Common myeloid progenitor, CD34-positive (primary cell): ENCODE measurements at regions of chr7 and their contacts with region 1.

Region 1: DNA sequence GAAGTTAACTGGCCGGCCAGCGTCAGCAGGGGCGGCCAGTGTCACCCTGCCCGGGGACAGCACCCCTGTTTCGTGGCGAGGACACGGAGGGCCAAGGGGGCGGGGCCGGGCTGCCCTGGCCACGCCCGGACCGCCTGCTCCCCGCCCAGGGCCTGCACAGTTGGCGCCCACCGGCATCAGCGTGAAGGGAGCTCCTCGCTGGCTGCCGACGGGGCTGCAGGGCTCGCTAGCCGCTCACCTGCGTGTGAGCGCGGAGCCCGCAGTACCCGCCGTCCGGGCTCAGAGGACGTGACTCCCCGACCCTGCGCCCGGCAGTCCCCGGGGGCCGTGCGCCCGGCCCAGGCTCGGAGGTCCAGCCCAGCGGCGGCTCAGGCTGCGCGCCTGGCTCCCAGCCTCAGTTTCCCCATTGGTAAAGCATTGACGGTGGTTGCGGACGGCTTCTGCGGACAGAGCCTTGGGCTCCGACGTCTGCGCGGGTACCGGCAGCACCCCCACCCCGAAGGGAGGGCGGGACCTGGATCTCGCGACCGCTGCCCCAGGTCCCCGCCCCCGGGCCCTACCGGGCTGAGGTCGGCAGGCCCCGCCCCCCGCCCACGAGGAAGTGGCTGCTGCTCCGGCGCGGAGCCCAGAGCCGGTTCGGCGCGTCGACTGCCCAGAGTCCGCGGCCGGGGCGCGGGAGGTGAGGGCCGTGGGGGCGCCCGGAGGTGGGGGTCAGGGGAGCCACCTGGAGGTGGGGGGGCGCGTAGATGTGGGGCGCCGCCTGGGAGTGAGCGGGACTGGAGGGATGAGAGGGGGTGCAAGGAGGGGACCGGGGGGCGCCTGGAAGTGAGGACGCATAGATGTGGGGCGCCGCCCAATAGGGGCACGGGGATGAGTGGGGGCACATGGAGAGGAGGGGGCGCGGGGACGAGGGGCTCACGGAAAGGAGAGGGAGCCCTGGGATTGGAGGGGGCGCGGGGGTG is at the start of gene ARPC1B:
- DNase-seq: peak; percentile 85 to 92 (median 90)
- H3K4me3 ChIP-seq: peak within 1 kb of the TSS; percentile 75 to 95 (median 84)
- H3K27ac ChIP-seq: peak within 1 kb of the TSS in 1 of 2 experiments; percentile 79
- H3K4me1 ChIP-seq: peaks cover 3 to 58% (median 27%) of the 10 kb centered on the region in 4 experiments
- H3K27me3 ChIP-seq: no peaks in the 10 kb centered on the region

Region 2: DNA sequence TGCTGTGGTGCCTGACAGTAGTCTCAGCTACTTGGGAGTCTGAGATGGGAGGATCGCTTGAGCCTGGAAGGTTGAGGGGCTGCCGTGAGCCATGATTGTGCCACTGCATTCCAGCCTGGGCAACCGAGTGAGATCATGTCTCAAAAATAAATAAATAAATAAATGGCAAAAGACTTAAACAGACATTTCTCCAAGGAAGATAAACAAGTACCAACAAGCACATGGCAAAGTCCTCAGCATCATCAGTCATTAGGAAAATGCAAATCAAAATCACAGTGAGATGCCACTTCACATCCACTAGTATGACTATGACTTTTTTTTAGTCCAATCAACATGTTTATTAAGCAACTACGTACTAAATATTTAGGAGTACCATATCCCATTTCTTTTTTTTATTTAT is 145.2 kb before region 1 on chr7:
- CTCF ChIA-PET with region 1: no interaction called
- POLR2A ChIA-PET with region 1: no interaction called
- DNase-seq: no peak
- H3K4me3 ChIP-seq: no peak overlapping the region
- H3K27ac ChIP-seq: no peak overlapping the region
- H3K4me1 ChIP-seq: peaks cover 0 to 5% (median 1%) of the 10 kb centered on the region in 4 experiments
- H3K27me3 ChIP-seq: no peaks in the 10 kb centered on the region

Region 3: DNA sequence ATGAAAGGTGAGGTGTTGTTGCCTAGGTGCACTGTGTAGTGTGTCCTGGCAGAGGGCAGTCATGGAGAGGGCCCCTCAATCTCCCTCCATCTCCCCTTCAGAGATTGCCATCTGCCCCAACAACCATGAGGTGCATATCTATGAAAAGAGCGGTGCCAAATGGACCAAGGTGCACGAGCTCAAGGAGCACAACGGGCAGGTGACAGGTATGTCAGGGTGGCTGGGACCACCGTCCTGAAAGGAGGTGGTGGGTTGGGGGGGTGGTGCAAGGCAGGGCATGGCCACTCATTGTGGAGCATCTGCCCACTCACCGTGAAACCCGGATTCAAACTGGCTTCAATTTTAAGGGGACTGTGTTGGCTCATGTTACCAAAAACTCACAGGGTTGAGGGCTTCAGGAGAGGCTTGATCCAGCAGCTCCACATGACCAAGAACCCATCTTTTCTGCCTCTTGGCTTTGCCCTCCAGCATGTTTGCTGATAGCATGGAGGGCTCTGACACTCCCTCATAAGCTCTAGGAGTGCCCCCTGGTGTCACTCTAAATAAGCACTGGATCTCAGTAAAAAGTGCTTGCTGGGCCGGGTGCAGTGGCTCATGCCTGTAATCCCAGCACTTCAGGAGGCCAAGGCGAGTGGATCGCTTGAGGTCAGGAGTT is 12.3 kb after region 1 on chr7:
- CTCF ChIA-PET with region 1: interaction called, 22 read pairs
- POLR2A ChIA-PET with region 1: interaction called, 3 read pairs
- DNase-seq: peak in 2 of 3 donors; percentile 82 to 85
- H3K4me3 ChIP-seq: no peak overlapping the region
- H3K27ac ChIP-seq: no peak overlapping the region
- H3K4me1 ChIP-seq: peaks cover 0 to 20% (median 8%) of the 10 kb centered on the region in 4 experiments
- H3K27me3 ChIP-seq: no peaks in the 10 kb centered on the region